ENCODE measurements at regions of chr14 and their contacts with region 1.

Region 1: GRCh38 chr14:52272375-52272774 is 4.9 kb downstream of the PTGDR start:
- DNase-seq: peak; percentile 52
- H3K4me3 Mint-ChIP-seq: no peak overlapping the region
- H3K27ac Mint-ChIP-seq: no peak overlapping the region
- H3K4me1 Mint-ChIP-seq: peaks cover 24% of the 10 kb centered on the region
- H3K27me3 Mint-ChIP-seq: peaks cover 76% of the 10 kb centered on the region

Region 2: DNA sequence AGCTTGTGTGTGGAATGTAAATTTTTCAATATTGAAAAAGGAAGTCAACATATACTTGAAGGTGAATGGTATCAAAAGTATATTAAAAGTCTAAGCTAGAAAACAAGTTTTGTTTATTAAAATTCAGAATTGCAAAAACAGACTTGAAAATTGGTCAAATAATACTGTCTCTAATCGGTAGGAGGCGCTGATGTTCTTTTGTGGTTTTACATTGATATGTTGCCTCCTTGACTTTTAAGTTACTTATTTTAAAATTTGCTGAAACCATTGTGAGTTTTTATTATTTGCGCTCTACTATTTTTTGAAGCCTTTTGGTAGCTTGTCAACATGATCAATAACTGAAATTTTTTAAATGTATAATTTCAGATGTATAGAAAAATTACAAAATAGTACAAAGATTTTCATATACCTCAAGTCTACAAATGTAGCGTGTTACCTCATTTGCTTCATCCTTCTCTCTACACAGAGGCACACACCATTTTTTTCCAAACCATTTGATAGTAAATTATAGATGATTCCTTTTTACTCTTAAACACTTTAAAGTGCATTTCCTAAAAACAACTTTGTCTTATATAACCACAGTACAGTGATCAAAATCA is 276.1 kb before region 1 on chr14:
- CTCF ChIA-PET with region 1: interaction called, 16 read pairs
- DNase-seq: no peak
- H3K4me3 Mint-ChIP-seq: no peak overlapping the region
- H3K27ac Mint-ChIP-seq: no peak overlapping the region
- H3K4me1 Mint-ChIP-seq: peaks cover 35% of the 10 kb centered on the region
- H3K27me3 Mint-ChIP-seq: no peaks in the 10 kb centered on the region